Activated T-helper 2 cell treated with anti-CD3 and anti-CD28 coated beads, Interferon-gamma antibody, Interleukin-2, Interleukin-4, amounts not matched to agents 10 μg/mL and 5 μg/mL and 100 μg/mL, durations not matched to agents 14 hours and 24 hours and 36 hours (primary cell): ENCODE measurements at regions of chr19 and their contacts with region 1.

Region 1: GRCh38 chr19:38425810-38426466 is at the start of gene RASGRP4:
- DNase-seq: peak; percentile 46
- H3K4me3 Mint-ChIP-seq: peak within 1 kb of the TSS; percentile 75
- H3K27ac Mint-ChIP-seq: peak within 1 kb of the TSS; percentile 95
- H3K4me1 Mint-ChIP-seq: peaks cover 28% of the 10 kb centered on the region
- H3K27me3 Mint-ChIP-seq: no peaks in the 10 kb centered on the region
- total RNA-seq, gene RASGRP4: 17.6 and 20.0 TPM in 2 replicates

Region 2: DNA sequence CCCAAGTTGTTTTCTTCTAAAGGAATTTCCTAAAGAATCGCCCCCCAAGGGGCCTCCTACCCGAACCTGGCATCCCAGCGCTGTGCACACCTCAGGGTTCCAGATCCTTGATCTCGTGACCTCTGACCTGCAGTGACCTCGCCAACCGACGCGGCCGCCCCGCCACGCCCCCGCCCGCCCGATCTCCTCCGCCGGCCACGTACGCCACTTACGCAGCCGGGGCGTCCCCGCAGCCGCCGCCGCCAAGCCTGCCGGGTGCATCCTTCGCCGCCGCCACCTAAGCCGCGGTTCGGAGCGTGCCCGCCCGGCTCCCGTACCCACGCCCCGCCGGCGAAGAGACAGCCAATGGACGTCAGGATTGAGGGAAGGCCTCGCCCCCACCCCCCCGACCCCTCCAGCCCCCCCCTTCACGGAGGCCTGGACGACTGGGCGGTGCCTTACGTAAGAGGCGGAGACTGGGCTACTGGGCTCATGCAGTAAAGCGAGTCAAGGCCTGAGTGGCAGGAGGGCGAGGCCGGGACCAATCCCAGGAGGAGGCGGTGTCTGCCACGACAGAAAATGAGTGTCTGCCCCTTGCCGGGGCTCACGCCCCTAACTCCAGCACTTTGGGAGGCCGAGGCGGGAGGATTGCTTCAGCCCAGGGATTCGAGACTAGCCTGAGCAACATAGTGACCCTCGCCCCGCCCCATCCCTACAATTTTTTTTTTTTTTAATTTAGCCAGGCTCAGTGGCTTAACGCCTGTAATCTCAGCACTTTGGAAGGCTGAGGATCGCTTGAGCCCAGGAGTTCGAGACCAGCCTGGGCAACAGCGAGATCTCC is 110.1 kb before region 1 on chr19 and contains the start of gene YIF1B:
- intact Hi-C with region 1: no loop called
- DNase-seq: peak; percentile 94
- H3K4me3 Mint-ChIP-seq: peak within 1 kb of the TSS; percentile 93
- H3K27ac Mint-ChIP-seq: peak within 1 kb of the TSS; percentile 90
- H3K4me1 Mint-ChIP-seq: peaks cover 41% of the 10 kb centered on the region
- H3K27me3 Mint-ChIP-seq: no peaks in the 10 kb centered on the region
- total RNA-seq, gene YIF1B: 106 and 114 TPM in 2 replicates

Region 3: GRCh38 chr19:38361633-38362075 is 64.3 kb before region 1 on chr19:
- intact Hi-C with region 1: no loop called
- DNase-seq: peak; percentile 77
- H3K4me3 Mint-ChIP-seq: peak overlapping the region; percentile 88
- H3K27ac Mint-ChIP-seq: peak overlapping the region; percentile 81
- H3K4me1 Mint-ChIP-seq: peaks cover 11% of the 10 kb centered on the region
- H3K27me3 Mint-ChIP-seq: peaks cover 33% of the 10 kb centered on the region

Region 4: GRCh38 chr19:38464421-38465082 is 38.6 kb after region 1 on chr19:
- intact Hi-C with region 1: no loop called
- DNase-seq: no peak
- H3K4me3 Mint-ChIP-seq: no peak overlapping the region
- H3K27ac Mint-ChIP-seq: no peak overlapping the region
- H3K4me1 Mint-ChIP-seq: no peaks in the 10 kb centered on the region
- H3K27me3 Mint-ChIP-seq: no peaks in the 10 kb centered on the region

Region 5: DNA sequence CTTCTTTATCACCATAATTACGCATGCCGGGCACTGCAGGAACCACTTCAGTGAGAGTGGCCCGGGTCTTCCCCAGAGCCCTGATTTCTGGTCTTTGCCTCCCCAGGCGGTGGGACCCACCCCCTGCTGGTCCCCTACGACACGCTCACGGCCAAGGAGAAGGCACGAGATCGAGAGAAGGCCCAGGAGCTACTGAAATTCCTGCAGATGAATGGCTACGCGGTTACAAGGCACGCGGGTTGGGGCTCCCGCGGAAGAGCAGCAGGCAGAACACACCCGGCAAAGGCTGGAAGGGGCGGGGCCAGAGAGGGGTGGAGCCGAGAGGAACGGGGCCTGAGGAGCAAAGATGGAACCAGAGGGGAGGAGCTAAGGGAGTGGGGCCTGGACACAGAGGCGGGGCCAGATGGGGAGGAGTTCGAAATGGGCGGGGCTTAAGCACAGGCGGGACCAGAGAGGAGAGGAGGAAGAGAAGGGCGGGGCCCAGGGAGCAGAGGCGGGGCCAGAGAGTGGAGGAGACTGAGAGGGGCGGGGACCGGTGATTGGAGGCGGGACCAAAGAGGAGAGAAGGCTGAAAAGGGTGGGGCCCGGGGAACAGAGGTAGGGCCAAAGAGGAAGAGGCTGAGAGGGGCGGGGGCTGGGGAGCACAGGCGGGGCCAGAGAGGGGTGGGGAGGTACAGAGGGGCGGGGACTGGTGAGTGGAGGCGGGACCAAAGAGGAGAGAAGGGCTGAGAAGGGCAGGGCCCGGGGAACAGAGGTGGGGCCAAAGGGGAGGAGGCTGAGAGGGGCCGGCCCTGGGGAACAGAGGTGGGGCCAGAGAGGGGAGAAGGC is 81.0 kb after region 1 on chr19:
- intact Hi-C with region 1: loop called (anchors 5 kb)
- DNase-seq: peak; percentile 88
- H3K4me3 Mint-ChIP-seq: no peak overlapping the region
- H3K27ac Mint-ChIP-seq: no peak overlapping the region
- H3K4me1 Mint-ChIP-seq: peaks cover 4% of the 10 kb centered on the region
- H3K27me3 Mint-ChIP-seq: peaks cover 3% of the 10 kb centered on the region